ENCODE measurements at regions of chr7 and their contacts with region 1.

Region 1: DNA sequence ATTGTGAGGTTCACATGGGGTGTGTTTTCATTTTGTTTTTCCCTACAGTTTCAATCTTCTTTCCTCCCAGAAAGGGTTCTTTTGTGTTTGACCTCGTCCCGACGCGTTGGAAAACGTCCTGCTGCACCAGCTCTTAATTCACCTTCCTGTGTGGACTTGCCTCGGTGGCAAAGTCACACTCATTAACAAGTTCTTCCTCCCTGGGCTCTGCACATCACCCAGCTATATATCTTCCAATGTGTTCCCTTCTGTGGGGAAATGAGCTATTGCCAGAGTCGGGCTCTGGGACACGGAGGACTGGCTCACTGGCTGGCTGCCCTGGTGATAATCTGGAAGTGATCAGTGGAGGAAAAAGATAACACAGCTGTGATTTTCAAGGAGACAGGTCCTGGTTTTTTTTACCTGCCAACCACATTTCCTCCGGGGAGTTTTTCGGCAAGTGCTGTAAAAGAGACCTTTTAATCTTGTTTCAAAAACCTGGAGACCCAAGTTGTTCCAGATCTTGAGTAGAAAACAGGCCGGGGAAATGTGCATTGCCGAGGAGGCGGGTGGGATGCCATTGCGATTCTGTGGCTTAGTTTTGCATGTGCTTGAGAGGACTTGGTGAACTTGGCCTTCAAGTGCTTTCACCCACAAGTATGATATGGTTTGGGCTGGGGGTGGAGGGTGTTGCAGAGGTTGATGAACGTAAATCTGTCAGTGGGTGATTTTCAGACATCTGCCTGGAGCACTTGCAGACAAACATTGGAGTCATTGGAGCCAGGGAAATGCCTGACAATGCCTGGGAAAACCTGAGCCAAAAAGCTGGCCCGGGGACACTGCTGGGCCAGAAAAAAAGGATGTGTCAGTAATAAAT is 96.5 kb upstream of the CREB5 start:
- DNase-seq: peak in 1 of 2 donors; percentile 48
- H3K4me3 ChIP-seq: peak overlapping the region in 2 of 3 donors; percentile 10 to 56
- H3K27ac ChIP-seq: peak overlapping the region; percentile 52 to 66
- H3K4me1 ChIP-seq: no peaks in the 10 kb centered on the region
- H3K27me3 ChIP-seq: no peaks in the 10 kb centered on the region
- CTCF ChIP-seq: no peak
- POLR2A ChIP-seq: no peak

Region 2: GRCh38 chr7:28581351-28581750 is 265.6 kb after region 1 on chr7:
- intact Hi-C with region 1: loop called (anchors 5 kb)
- DNase-seq: no peak
- H3K4me3 ChIP-seq: no peak overlapping the region
- H3K27ac ChIP-seq: no peak overlapping the region
- H3K4me1 ChIP-seq: no peaks in the 10 kb centered on the region
- H3K27me3 ChIP-seq: peaks cover 0 to 12% of the 10 kb centered on the region in 2 donors
- CTCF ChIP-seq: no peak
- POLR2A ChIP-seq: no peak

Region 3: DNA sequence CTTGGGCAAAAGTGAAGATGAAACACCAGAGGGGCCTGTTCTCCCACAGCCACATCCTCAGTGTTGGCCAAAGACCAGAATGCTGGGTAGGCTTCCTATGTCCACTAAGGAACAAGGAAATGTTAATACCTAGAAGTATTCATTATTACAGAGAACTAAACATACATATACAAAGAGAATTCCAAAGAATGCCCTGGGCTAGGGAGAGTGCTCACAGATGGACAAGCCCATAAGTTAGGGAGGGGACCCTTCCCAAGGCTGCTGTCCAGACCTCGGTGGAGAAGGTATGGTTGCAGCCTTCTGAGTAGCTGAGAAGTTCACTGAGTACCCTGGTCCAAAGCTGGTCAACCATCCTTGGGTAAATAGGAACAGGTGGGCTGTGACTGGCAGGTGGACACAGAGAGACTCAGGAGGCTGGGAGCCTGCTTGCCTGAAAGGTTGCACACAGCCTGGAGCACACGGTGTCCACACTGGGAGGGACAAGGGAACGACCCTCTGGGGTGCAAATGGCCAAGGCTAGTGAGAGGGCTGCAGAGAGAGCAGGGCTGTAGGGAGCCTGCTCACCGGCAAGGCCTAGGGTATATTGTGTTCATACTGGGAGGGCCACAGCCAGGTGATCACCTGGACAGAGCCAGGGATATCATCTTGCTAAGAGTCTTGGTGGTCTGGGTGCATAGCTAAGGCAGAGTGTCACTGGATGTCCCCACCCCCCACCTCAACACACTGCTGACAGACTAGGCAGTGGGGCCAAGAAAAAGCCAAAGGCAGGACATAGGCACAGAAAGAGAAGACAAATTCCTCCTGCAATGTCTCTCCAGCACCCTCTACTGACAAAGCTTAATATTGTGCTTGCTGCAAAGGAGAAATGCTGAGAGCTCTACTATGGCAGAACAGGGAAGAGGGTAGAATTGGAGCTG is 790.2 kb after region 1 on chr7:
- intact Hi-C with region 1: no loop called
- DNase-seq: peak in 1 of 2 donors; percentile 52
- H3K4me3 ChIP-seq: no peak overlapping the region
- H3K27ac ChIP-seq: peak overlapping the region in 1 of 2 donors; percentile 11
- H3K4me1 ChIP-seq: peaks cover 0 to 7% of the 10 kb centered on the region in 2 donors
- H3K27me3 ChIP-seq: no peaks in the 10 kb centered on the region
- CTCF ChIP-seq: peak; percentile 54 to 86 (median 79)
- POLR2A ChIP-seq: no peak